Endothelial cell of umbilical vein (primary cell): ENCODE measurements at regions of chr17 and their contacts with region 1.

Region 1: DNA sequence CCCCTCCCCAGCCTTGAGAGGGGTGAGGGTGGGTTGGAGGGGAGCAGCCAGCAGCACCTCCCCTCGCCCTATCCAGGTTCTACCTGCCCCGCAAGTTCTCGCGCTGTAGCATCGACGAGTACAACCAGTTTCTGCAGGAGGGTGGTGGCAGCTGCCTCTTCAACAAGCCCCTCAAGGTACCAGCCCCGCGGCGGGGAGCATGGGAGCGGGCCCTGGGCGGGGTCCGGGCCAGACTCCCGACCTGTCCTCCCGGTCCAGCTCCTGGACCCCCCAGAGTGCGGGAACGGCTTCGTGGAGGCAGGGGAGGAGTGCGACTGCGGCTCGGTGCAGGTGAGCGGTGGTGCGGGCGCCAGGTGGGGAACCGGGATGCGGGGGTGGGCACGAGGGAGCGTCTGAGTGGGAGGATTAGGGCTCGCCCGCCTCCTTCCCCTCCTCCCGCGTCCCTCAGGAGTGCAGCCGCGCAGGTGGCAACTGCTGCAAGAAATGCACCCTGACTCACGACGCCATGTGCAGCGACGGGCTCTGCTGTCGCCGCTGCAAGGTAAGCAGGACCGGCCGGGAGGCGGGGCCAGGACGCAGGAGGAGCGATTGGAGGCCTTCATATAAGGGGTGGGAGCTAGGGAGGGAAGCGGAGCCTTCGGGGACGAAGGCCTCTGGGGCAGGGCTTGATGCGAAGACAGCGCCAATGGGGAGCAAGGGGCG is 16.5 kb downstream of the ADAM11 start:
- DNase-seq: peak; percentile 98
- H3K4me3 ChIP-seq: peak overlapping the region; percentile 9 to 51 (median 20)
- H3K27ac ChIP-seq: no peak overlapping the region
- H3K4me1 ChIP-seq: peaks cover 5% of the 10 kb centered on the region
- H3K27me3 ChIP-seq: no peaks in the 10 kb centered on the region
- CTCF ChIP-seq: no peak
- POLR2A ChIP-seq: no peak

Region 2: GRCh38 chr17:44807817-44808155 is 32.5 kb after region 1 on chr17:
- CTCF ChIA-PET with region 1: interaction called, 13 read pairs
- POLR2A ChIA-PET with region 1: no interaction called
- dilution Hi-C with region 1: no loop called
- intact Hi-C with region 1: no loop called
- DNase-seq: no peak
- H3K4me3 ChIP-seq: no peak overlapping the region
- H3K27ac ChIP-seq: no peak overlapping the region
- H3K4me1 ChIP-seq: no peaks in the 10 kb centered on the region
- H3K27me3 ChIP-seq: no peaks in the 10 kb centered on the region
- CTCF ChIP-seq: no peak
- POLR2A ChIP-seq: no peak

Region 3: DNA sequence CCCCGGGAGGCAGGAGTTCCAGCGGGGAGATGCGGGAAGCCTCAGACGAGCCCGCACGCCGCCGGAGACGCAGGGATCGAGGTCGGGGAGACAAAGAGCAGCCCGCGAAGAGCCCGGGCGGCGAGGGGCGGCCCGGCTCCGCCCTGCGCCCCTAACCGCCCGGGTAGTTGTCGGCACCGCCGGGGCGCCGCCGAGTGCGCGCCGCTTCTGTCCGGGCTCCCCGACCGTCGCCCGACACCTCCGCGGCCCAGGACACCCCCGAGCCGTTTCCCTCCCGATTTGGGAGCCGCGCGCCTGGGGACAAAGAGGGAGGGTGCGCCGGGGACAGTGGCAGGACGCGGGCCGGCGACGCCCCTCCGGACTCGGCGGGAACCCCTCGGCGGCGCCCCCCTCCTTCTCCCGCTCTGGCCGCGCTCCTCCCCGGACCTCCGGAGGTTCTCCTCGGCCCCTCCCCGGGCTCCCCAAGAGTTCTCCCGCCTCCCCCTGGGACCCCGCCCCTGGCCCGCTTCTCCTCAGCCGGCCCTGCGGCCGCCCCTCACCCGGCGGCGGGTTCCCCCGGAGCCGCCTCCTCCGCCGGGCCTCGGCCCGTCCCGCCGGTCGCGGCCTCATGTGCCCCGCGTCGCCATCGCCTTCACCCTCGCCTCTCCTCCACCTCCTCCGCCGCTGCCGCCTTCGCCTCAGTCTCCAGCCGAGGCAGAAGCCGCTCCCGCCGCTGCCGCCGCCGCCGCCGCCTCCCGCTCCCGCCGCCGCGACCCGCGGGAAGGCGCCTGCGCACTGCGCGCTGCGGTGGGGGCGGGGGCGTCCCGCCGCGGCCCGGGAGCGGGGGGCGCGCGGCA is 54.5 kb after region 1 on chr17 and contains the start of gene GJC1:
- CTCF ChIA-PET with region 1: interaction called, 78 read pairs
- POLR2A ChIA-PET with region 1: no interaction called
- dilution Hi-C with region 1: no loop called
- intact Hi-C with region 1: loop called (anchors 1 kb)
- DNase-seq: peak; percentile 58
- H3K4me3 ChIP-seq: peak within 1 kb of the TSS; percentile 85 to 98 (median 96)
- H3K27ac ChIP-seq: peak within 1 kb of the TSS; percentile 58
- H3K4me1 ChIP-seq: peaks cover 7% of the 10 kb centered on the region
- H3K27me3 ChIP-seq: no peaks in the 10 kb centered on the region
- CTCF ChIP-seq: no peak
- POLR2A ChIP-seq: peak; percentile 20
- total RNA-seq, gene GJC1: 35.9 and 39.7 TPM in 2 replicates

Region 4: GRCh38 chr17:44864866-44865660 is 89.8 kb after region 1 on chr17:
- CTCF ChIA-PET with region 1: interaction called, 368 read pairs
- POLR2A ChIA-PET with region 1: no interaction called
- dilution Hi-C with region 1: loop called (anchors 25 kb)
- intact Hi-C with region 1: loop called (anchors 1 kb)
- DNase-seq: peak; percentile 80
- H3K4me3 ChIP-seq: no peak overlapping the region
- H3K27ac ChIP-seq: no peak overlapping the region
- H3K4me1 ChIP-seq: peaks cover 14% of the 10 kb centered on the region
- H3K27me3 ChIP-seq: no peaks in the 10 kb centered on the region
- CTCF ChIP-seq: peak; percentile 82 to 84
- POLR2A ChIP-seq: no peak

Region 5: GRCh38 chr17:44878627-44879221 is 103.4 kb after region 1 on chr17:
- CTCF ChIA-PET with region 1: interaction called, 295 read pairs
- POLR2A ChIA-PET with region 1: no interaction called
- dilution Hi-C with region 1: loop called (anchors 25 kb)
- intact Hi-C with region 1: loop called (anchors 1 kb)
- DNase-seq: peak; percentile 49
- H3K4me3 ChIP-seq: no peak overlapping the region
- H3K27ac ChIP-seq: no peak overlapping the region
- H3K4me1 ChIP-seq: no peaks in the 10 kb centered on the region
- H3K27me3 ChIP-seq: no peaks in the 10 kb centered on the region
- CTCF ChIP-seq: peak; percentile 35 to 52
- POLR2A ChIP-seq: no peak